CD8-positive, alpha-beta T cell (primary cell): ENCODE measurements at regions of chr19 and their contacts with region 1.

Region 1: GRCh38 chr19:46704379-46705076 is 12.4 kb downstream of the PRKD2 start:
- DNase-seq: peak; percentile 80 to 96 (median 84)
- ATAC-seq: peak; percentile 99
- H3K4me3 ChIP-seq: no peak overlapping the region
- H3K4me3 Mint-ChIP-seq: no peak overlapping the region
- H3K27ac ChIP-seq: no peak overlapping the region
- H3K27ac Mint-ChIP-seq: peak overlapping the region; percentile 64
- H3K4me1 ChIP-seq: peaks cover 10% of the 10 kb centered on the region
- H3K4me1 Mint-ChIP-seq: peaks cover 12% of the 10 kb centered on the region
- H3K27me3 ChIP-seq: no peaks in the 10 kb centered on the region
- H3K27me3 Mint-ChIP-seq: no peaks in the 10 kb centered on the region
- CTCF ChIP-seq: peak; percentile 87

Region 2: DNA sequence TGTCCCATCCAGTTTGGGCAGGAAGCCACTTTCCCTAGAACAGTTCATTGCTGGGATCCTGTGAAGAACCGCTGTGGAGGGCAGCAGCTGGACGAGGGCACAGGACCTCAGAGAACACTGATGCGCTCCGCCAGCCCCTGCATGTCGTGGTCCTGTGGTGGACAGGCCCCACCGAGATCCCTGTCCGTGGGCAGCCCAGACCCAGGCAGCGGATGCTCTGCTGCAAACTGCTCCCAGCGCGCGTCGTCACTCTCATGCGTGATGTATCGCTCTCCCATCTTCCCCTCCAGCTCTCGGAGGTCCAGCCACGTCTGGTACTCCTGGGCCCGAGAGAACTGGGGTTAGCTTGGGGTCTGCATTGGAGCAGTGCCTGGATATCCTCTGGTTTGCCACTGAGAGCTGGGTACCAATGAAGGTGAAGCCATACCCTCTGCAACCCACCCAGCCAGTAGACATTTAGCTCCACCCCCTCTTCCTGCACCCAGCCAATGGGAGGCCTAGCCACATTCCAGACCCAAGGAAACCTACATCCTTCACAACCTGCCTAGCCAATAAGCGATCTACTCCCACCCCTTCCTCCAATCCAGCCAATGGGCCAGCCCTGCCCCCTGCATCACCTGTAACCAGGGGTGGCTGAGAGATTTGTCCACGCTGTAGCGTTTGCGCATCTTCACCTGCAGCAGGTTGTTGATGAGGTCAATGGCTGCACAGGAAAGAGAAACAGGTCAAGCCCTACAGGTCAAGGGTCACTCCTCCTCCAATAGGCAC is 29.9 kb before region 1 on chr19:
- CTCF ChIA-PET with region 1: interaction called, 10 read pairs
- POLR2A ChIA-PET with region 1: no interaction called
- intact Hi-C with region 1: no loop called
- DNase-seq: no peak
- ATAC-seq: no peak
- H3K4me3 ChIP-seq: no peak overlapping the region
- H3K4me3 Mint-ChIP-seq: no peak overlapping the region
- H3K27ac ChIP-seq: no peak overlapping the region
- H3K27ac Mint-ChIP-seq: no peak overlapping the region
- H3K4me1 ChIP-seq: no peaks in the 10 kb centered on the region
- H3K4me1 Mint-ChIP-seq: peaks cover 3% of the 10 kb centered on the region
- H3K27me3 ChIP-seq: no peaks in the 10 kb centered on the region
- H3K27me3 Mint-ChIP-seq: no peaks in the 10 kb centered on the region
- CTCF ChIP-seq: no peak

Region 3: DNA sequence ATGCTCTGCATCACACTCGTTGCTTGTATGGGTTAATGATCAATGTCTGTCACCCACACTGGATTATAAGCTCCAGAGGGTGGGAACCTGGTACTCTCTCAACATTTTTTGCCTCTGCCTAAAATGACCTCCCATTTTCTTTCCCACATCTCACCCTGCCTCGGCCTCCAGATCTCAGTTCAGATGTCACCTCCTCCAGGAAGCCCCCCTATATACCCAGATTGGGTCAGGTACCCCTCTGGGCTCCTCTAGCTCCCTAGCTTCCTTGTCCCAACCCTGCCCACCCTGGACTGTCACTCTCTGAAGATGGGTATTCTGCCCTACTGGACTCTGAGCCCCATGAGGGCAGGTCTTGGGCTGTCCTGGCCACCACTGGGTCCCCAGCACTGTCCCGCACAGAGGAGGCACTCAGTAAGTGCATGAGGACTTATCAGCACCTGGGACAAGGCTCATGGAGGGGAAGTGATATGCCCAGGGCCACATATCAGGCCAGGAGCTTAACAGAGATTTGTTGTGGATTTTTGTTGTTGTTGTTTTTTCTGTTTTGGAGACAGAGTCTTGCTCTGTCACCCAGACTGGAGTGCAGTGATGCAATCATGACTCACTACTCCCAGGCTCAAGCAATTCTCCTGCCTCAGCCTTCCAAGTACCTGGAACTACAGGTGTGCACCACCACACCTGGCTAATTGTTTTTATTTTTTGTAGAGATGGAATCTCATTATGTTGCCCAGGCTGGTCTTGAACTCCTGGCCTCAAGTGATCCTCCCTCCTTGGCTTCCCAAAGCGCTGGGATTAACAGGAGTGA is 11.4 kb before region 1 on chr19:
- CTCF ChIA-PET with region 1: interaction called, 26 read pairs
- POLR2A ChIA-PET with region 1: interaction called, 3 read pairs
- intact Hi-C with region 1: no loop called
- DNase-seq: no peak
- ATAC-seq: no peak
- H3K4me3 ChIP-seq: no peak overlapping the region
- H3K4me3 Mint-ChIP-seq: no peak overlapping the region
- H3K27ac ChIP-seq: peak overlapping the region in 1 of 2 experiments; percentile 15
- H3K27ac Mint-ChIP-seq: peak overlapping the region; percentile 41
- H3K4me1 ChIP-seq: no peaks in the 10 kb centered on the region
- H3K4me1 Mint-ChIP-seq: peaks cover 10% of the 10 kb centered on the region
- H3K27me3 ChIP-seq: no peaks in the 10 kb centered on the region
- H3K27me3 Mint-ChIP-seq: no peaks in the 10 kb centered on the region
- CTCF ChIP-seq: no peak

Region 4: GRCh38 chr19:46728693-46729676 is 24.5 kb after region 1 on chr19:
- CTCF ChIA-PET with region 1: interaction called, 269 read pairs
- POLR2A ChIA-PET with region 1: interaction called, 7 read pairs
- intact Hi-C with region 1: loop called (anchors 1 kb)
- DNase-seq: peak; percentile 64 to 93 (median 84)
- ATAC-seq: peak; percentile 90
- H3K4me3 ChIP-seq: no peak overlapping the region
- H3K4me3 Mint-ChIP-seq: no peak overlapping the region
- H3K27ac ChIP-seq: no peak overlapping the region
- H3K27ac Mint-ChIP-seq: peak overlapping the region; percentile 32
- H3K4me1 ChIP-seq: peaks cover 13% of the 10 kb centered on the region
- H3K4me1 Mint-ChIP-seq: peaks cover 10% of the 10 kb centered on the region
- H3K27me3 ChIP-seq: no peaks in the 10 kb centered on the region
- H3K27me3 Mint-ChIP-seq: no peaks in the 10 kb centered on the region
- CTCF ChIP-seq: peak; percentile 90

Region 5: DNA sequence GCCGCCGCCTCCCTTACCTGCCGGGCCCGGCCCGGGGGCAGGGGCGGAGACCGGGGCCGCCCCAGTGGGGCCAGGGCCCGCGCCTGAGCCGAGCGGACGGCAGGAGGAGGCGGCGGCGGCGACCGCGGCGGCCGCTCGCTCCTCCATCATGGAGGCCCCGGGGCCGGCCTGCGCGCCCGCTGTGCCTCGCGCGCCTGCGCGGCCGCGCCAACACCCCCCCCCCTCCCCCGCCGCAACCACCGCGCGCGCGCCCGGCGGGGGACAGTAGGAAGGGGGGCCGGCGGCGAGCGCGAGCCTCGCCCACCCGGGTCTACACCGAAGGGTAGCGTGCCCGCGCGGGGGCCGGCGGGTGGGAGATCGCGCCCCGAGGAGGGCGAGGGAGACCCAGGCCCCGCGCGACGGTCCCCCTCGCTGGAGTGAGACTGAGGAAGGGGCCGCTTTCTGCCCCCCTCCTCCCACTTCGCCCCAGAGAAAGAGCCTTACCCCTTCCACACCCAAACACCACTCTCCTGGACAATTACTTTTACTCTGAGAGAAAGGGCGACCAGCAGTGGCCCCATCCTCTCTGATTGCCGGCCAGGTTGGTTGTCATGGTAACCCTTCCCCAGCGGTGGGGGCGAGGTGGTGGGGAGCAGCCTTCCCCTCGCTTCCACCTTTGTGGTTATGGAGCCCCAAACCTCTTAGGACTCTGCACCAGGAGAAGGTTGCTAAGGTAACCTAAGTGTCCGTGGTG is 41.9 kb after region 1 on chr19 and contains the start of gene STRN4:
- CTCF ChIA-PET with region 1: interaction called, 43 read pairs
- POLR2A ChIA-PET with region 1: no interaction called
- intact Hi-C with region 1: loop called in 1 of 2 experiments (anchors 1 kb)
- DNase-seq: peak in 8 of 9 experiments; percentile 50 to 85 (median 64)
- ATAC-seq: peak; percentile 74
- H3K4me3 ChIP-seq: peak within 1 kb of the TSS; percentile 79 to 90
- H3K4me3 Mint-ChIP-seq: peak within 1 kb of the TSS; percentile 89
- H3K27ac ChIP-seq: peak within 1 kb of the TSS; percentile 46 to 61
- H3K27ac Mint-ChIP-seq: peak within 1 kb of the TSS; percentile 88
- H3K4me1 ChIP-seq: peaks cover 33% of the 10 kb centered on the region
- H3K4me1 Mint-ChIP-seq: peaks cover 51% of the 10 kb centered on the region
- H3K27me3 ChIP-seq: no peaks in the 10 kb centered on the region
- H3K27me3 Mint-ChIP-seq: no peaks in the 10 kb centered on the region
- CTCF ChIP-seq: no peak
- total RNA-seq, gene STRN4: 120 to 126 TPM

Region 6: GRCh38 chr19:46840136-46840942 is 135.8 kb after region 1 on chr19:
- CTCF ChIA-PET with region 1: interaction called, 19 read pairs
- POLR2A ChIA-PET with region 1: no interaction called
- intact Hi-C with region 1: no loop called
- DNase-seq: peak in 6 of 9 experiments; percentile 52 to 83 (median 62)
- ATAC-seq: peak; percentile 95
- H3K4me3 ChIP-seq: no peak overlapping the region
- H3K4me3 Mint-ChIP-seq: no peak overlapping the region
- H3K27ac ChIP-seq: no peak overlapping the region
- H3K27ac Mint-ChIP-seq: no peak overlapping the region
- H3K4me1 ChIP-seq: no peaks in the 10 kb centered on the region
- H3K4me1 Mint-ChIP-seq: no peaks in the 10 kb centered on the region
- H3K27me3 ChIP-seq: no peaks in the 10 kb centered on the region
- H3K27me3 Mint-ChIP-seq: no peaks in the 10 kb centered on the region
- CTCF ChIP-seq: peak; percentile 77